ENCODE measurements at regions of chr17 and their contacts with region 1.

Region 1: GRCh38 chr17:66829386-66829864 is 5.5 kb upstream of the CACNG5 start:
- DNase-seq: peak; percentile 74
- ATAC-seq: peak; percentile 94
- H3K4me3 Mint-ChIP-seq: no peak overlapping the region
- H3K27ac Mint-ChIP-seq: no peak overlapping the region; the same call in 1 of the 2 replicates
- H3K4me1 Mint-ChIP-seq: peaks cover 29% of the 10 kb centered on the region
- H3K27me3 Mint-ChIP-seq: peaks cover 14% of the 10 kb centered on the region
- CTCF ChIP-seq: no peak

Region 2: GRCh38 chr17:66841328-66841727 is 11.9 kb after region 1 on chr17:
- CTCF ChIA-PET with region 1: interaction called, 10 read pairs
- POLR2A ChIA-PET with region 1: no interaction called
- DNase-seq: no peak
- ATAC-seq: peak; percentile 69
- H3K4me3 Mint-ChIP-seq: no peak overlapping the region
- H3K27ac Mint-ChIP-seq: no peak overlapping the region
- H3K4me1 Mint-ChIP-seq: no peaks in the 10 kb centered on the region
- H3K27me3 Mint-ChIP-seq: peaks cover 6% of the 10 kb centered on the region
- CTCF ChIP-seq: no peak

Region 3: GRCh38 chr17:67035131-67036083 is 206.0 kb after region 1 on chr17:
- CTCF ChIA-PET with region 1: no interaction called
- POLR2A ChIA-PET with region 1: no interaction called
- DNase-seq: no peak
- ATAC-seq: no peak
- H3K4me3 Mint-ChIP-seq: no peak overlapping the region
- H3K27ac Mint-ChIP-seq: no peak overlapping the region
- H3K4me1 Mint-ChIP-seq: no peaks in the 10 kb centered on the region; the same call in 1 of the 2 replicates
- H3K27me3 Mint-ChIP-seq: no peaks in the 10 kb centered on the region
- CTCF ChIP-seq: no peak

Measured in WTC11 (cell line).